ENCODE measurements at regions of chr20 and their contacts with region 1.

Region 1: GRCh38 chr20:62937366-62938104 is 412 bp upstream of the GID8 start:
- DNase-seq: peak; percentile 90
- H3K4me3 ChIP-seq: peak overlapping the region; percentile 95
- H3K27ac ChIP-seq: peak overlapping the region; percentile 96
- H3K27me3 ChIP-seq: no peaks in the 10 kb centered on the region
- CTCF ChIP-seq: no peak

Region 2: GRCh38 chr20:62900052-62900691 is 37.4 kb before region 1 on chr20:
- CTCF ChIA-PET with region 1: interaction called, 7 read pairs
- POLR2A ChIA-PET with region 1: interaction called, 16 read pairs
- DNase-seq: peak; percentile 33
- H3K4me3 ChIP-seq: no peak overlapping the region
- H3K27ac ChIP-seq: no peak overlapping the region
- H3K27me3 ChIP-seq: no peaks in the 10 kb centered on the region
- CTCF ChIP-seq: peak; percentile 88

Region 3: DNA sequence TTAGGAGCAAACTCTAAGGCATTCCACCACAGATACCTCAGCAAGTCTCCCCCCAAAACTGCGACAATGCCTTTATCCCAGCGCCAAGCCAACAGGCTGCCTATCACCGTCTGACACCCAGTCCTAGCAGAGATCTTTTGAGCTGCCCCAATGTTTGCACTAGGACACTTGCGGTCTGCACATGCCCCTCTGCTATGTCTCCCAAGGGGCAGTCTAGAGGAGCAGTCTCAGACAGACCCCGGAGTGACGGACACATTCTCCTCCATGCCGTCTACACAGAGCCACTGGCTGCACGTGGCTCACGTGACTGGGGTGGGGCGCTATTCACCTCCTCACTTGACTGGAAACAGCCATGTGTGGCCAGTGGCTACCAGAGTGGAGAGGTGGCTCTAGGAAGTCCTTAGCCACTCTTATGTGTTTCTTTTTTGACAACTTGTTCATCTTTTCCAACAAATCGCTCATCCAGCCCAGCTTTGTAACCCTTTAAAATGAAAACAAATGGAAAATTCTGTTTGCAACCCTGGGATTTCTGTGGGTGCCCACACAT is 27.2 kb before region 1 on chr20:
- CTCF ChIA-PET with region 1: no interaction called
- POLR2A ChIA-PET with region 1: no interaction called
- DNase-seq: no peak
- H3K4me3 ChIP-seq: no peak overlapping the region
- H3K27ac ChIP-seq: no peak overlapping the region
- H3K27me3 ChIP-seq: no peaks in the 10 kb centered on the region
- CTCF ChIP-seq: no peak

Region 4: DNA sequence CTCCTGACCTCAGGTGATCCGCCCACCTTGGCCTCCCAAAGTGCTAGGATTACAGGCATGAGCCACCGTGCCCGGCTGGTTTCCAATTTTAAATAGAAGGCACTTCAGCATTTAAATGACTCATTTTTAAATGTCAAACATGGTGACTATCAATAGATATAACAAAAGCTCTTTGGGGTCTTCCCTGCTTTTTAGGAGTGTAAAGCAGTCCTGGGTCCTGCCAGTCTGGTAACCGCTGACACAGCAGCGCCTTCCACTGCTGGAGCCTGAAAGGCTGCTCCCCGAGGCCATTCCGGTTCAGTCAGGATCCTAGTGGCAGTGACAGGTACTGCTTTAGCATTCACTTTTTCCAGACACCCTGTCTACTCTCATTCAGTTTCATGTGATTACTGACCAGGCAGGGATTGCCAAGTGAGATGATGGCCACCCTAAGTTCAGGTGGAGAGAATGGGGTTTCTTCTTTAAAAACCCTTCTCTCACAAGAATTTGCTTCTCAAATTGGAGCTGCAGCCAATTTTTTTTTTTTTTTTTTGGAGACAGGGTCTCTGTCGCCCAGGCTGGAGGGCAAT is 16.3 kb before region 1 on chr20:
- CTCF ChIA-PET with region 1: interaction called, 11 read pairs
- POLR2A ChIA-PET with region 1: interaction called, 4 read pairs
- DNase-seq: no peak
- H3K4me3 ChIP-seq: no peak overlapping the region
- H3K27ac ChIP-seq: no peak overlapping the region
- H3K27me3 ChIP-seq: no peaks in the 10 kb centered on the region
- CTCF ChIP-seq: peak; percentile 61

Region 5: GRCh38 chr20:62926239-62927104 is 11.1 kb before region 1 on chr20 and contains the start of gene DIDO1:
- CTCF ChIA-PET with region 1: interaction called, 11 read pairs
- POLR2A ChIA-PET with region 1: interaction called, 11 read pairs
- DNase-seq: peak; percentile 49
- H3K4me3 ChIP-seq: peak within 1 kb of the TSS; percentile 87
- H3K27ac ChIP-seq: peak within 1 kb of the TSS; percentile 87
- H3K27me3 ChIP-seq: no peaks in the 10 kb centered on the region
- CTCF ChIP-seq: peak; percentile 59
- polyA plus RNA-seq, gene DIDO1: 22.1 and 25.9 TPM in 2 replicates

Region 6: DNA sequence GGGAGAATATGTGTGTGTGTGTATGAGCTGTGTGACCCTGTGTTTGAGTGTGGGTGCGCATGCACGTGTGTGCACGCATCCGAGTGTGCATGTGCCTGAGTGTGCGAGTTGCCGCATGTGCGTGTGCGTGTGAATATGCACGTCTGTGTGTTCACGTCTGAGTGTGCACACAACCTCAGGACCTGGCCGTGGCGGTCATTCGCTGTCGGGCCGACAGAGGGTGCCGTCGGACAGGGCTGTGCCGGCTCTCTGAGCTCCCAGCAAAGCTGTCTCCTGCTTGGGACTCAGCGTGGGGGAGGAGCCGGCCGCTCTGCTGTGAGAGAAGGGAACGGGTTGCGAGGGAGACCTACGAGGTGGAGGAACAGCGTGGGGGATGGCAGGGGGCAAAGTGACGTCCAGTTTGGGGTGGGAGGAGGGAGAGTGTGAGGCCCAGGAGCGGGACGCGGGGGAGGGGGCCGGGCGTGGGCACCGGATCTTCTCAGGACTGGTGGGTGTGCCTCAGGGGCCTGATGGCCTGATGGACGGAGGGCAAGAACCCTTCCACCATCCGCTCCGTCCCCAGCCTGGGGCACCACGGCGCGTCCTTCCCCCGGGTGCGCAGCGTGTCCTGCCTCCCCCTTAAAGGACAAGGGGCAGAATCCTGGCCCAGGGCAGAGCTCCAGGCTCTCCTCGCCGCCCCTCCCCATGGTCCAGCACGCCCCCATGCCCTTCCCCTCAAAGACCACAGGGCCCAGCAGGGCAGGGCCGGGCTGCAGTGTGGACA is 34.9 kb after region 1 on chr20:
- CTCF ChIA-PET with region 1: interaction called, 10 read pairs
- POLR2A ChIA-PET with region 1: no interaction called
- DNase-seq: peak; percentile 45
- H3K4me3 ChIP-seq: peak overlapping the region; percentile 39
- H3K27ac ChIP-seq: no peak overlapping the region
- H3K27me3 ChIP-seq: peaks cover 47% of the 10 kb centered on the region
- CTCF ChIP-seq: peak; percentile 87

Measured in AG04450 (cell line).